CD4-positive, alpha-beta memory T cell (primary cell): ENCODE measurements at regions of chr11 and their contacts with region 1.

Region 1: GRCh38 chr11:65817835-65818742 is 15.7 kb upstream of the SNX32 start:
- DNase-seq: peak; percentile 86 to 93 (median 88)
- H3K4me3 ChIP-seq: peak overlapping the region; percentile 24 to 70
- H3K4me3 Mint-ChIP-seq: peak overlapping the region; percentile 73 to 85 (median 78)
- H3K27ac ChIP-seq: peak overlapping the region; percentile 53
- H3K27ac Mint-ChIP-seq: peak overlapping the region; percentile 73 to 92 (median 81)
- H3K4me1 ChIP-seq: peaks cover 12% of the 10 kb centered on the region
- H3K4me1 Mint-ChIP-seq: peaks cover 6 to 16% (median 10%) of the 10 kb centered on the region in 4 donors
- H3K27me3 ChIP-seq: no peaks in the 10 kb centered on the region
- H3K27me3 Mint-ChIP-seq: no peaks in the 10 kb centered on the region

Region 2: DNA sequence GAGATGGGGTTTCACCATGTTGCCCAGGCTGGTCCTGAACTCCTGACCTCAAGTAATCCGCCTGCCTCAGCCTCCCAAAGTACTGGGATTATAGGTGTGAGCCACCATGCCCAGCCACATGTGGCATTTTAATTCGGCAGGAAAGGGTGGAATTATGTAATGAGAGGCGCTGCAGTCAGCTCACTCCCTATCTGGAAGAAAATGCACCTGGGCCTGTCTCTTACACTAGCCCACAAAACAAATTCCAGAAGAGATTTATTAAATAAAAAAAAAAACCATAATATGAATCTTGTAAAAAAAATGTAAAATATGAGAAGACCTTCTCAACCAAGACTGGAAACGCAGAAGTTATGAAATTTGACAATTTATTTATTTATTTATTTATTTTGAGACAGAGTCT is 114.2 kb before region 1 on chr11:
- CTCF ChIA-PET with region 1: interaction called, 19 read pairs
- POLR2A ChIA-PET with region 1: no interaction called
- intact Hi-C with region 1: loop called (anchors 1 kb)
- DNase-seq: no peak
- H3K4me3 ChIP-seq: no peak overlapping the region
- H3K4me3 Mint-ChIP-seq: no peak overlapping the region
- H3K27ac ChIP-seq: no peak overlapping the region
- H3K27ac Mint-ChIP-seq: no peak overlapping the region
- H3K4me1 ChIP-seq: no peaks in the 10 kb centered on the region
- H3K4me1 Mint-ChIP-seq: peaks cover 0 to 10% (median 0%) of the 10 kb centered on the region in 4 donors
- H3K27me3 ChIP-seq: no peaks in the 10 kb centered on the region
- H3K27me3 Mint-ChIP-seq: peaks cover 1 to 7% of the 10 kb centered on the region in 2 donors

Region 3: GRCh38 chr11:65773784-65774411 is 44.2 kb before region 1 on chr11:
- CTCF ChIA-PET with region 1: interaction called, 107 read pairs
- POLR2A ChIA-PET with region 1: interaction called, 4 read pairs
- intact Hi-C with region 1: loop called (anchors 1 kb)
- DNase-seq: no peak
- H3K4me3 ChIP-seq: no peak overlapping the region
- H3K4me3 Mint-ChIP-seq: no peak overlapping the region
- H3K27ac ChIP-seq: no peak overlapping the region
- H3K27ac Mint-ChIP-seq: no peak overlapping the region
- H3K4me1 ChIP-seq: peaks cover 3% of the 10 kb centered on the region
- H3K4me1 Mint-ChIP-seq: peaks cover 0 to 8% (median 3%) of the 10 kb centered on the region in 4 donors
- H3K27me3 ChIP-seq: no peaks in the 10 kb centered on the region
- H3K27me3 Mint-ChIP-seq: no peaks in the 10 kb centered on the region

Region 4: DNA sequence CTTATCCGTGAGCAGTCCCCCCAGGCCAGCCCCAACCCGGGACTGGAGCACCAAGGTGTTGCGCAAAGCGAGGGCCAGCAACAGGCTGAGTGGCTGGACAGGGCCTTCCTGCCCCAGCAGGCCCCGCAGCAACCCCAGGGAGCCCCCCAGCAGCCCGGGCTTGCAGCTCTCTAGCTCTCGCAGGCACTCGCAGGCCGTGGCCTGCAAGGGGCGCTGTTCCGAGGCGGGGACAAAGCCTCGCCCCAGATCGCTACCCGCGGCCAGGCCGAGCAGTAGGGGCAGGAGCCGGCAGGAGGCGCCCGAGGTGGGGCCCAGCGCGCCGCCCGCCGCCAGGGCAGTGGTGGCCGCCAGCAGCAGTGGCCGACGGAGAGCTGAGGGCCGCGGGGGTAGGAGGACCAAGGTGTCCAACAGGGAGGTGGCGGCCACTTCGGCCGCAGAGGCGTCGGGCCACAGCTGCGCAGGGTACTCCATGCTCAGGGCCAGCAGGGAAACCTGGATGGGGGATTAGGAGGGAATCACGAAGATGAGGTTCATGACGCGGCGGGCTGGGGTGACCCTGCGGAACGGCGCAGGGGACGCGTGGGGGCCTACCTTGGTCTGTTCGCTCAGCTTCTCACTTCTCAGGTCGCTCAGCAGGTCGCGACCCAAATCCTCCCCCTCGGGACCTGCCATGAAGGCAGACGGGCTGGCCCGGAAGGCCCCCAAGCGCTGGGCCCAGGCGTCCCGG is 38.1 kb before region 1 on chr11:
- CTCF ChIA-PET with region 1: interaction called, 107 read pairs
- POLR2A ChIA-PET with region 1: interaction called, 24 read pairs
- intact Hi-C with region 1: loop called (anchors 1 kb)
- DNase-seq: peak; percentile 74 to 79 (median 77)
- H3K4me3 ChIP-seq: peak overlapping the region; percentile 54 to 65
- H3K4me3 Mint-ChIP-seq: peak overlapping the region; percentile 74 to 89 (median 84)
- H3K27ac ChIP-seq: peak overlapping the region; percentile 62
- H3K27ac Mint-ChIP-seq: peak overlapping the region in 6 of 7 donors; percentile 49 to 74 (median 72)
- H3K4me1 ChIP-seq: peaks cover 18% of the 10 kb centered on the region
- H3K4me1 Mint-ChIP-seq: peaks cover 5 to 20% (median 13%) of the 10 kb centered on the region in 4 donors
- H3K27me3 ChIP-seq: no peaks in the 10 kb centered on the region
- H3K27me3 Mint-ChIP-seq: no peaks in the 10 kb centered on the region

Region 5: GRCh38 chr11:65833297-65834030 is 15.4 kb after region 1 on chr11 and contains the start of gene SNX32:
- CTCF ChIA-PET with region 1: interaction called, 15 read pairs
- POLR2A ChIA-PET with region 1: interaction called, 3 read pairs
- intact Hi-C with region 1: no loop called
- DNase-seq: peak; percentile 91 to 94 (median 93)
- H3K4me3 ChIP-seq: peak within 1 kb of the TSS; percentile 31 to 67
- H3K4me3 Mint-ChIP-seq: no peak within 1 kb of the TSS
- H3K27ac ChIP-seq: peak within 1 kb of the TSS; percentile 17
- H3K27ac Mint-ChIP-seq: peak within 1 kb of the TSS in 5 of 7 donors; percentile 29 to 82 (median 70)
- H3K4me1 ChIP-seq: peaks cover 20% of the 10 kb centered on the region
- H3K4me1 Mint-ChIP-seq: peaks cover 8% of the 10 kb centered on the region in 4 donors
- H3K27me3 ChIP-seq: no peaks in the 10 kb centered on the region
- H3K27me3 Mint-ChIP-seq: no peaks in the 10 kb centered on the region
- total RNA-seq, gene SNX32: 0.42 to 0.64 TPM

Region 6: GRCh38 chr11:65988791-65989592 is 170.9 kb after region 1 on chr11:
- CTCF ChIA-PET with region 1: interaction called, 4 read pairs
- POLR2A ChIA-PET with region 1: no interaction called
- intact Hi-C with region 1: loop called (anchors 1 kb)
- DNase-seq: peak; percentile 92 to 94 (median 93)
- H3K4me3 ChIP-seq: no peak overlapping the region
- H3K4me3 Mint-ChIP-seq: peak overlapping the region in 1 of 8 donors; percentile 3
- H3K27ac ChIP-seq: no peak overlapping the region
- H3K27ac Mint-ChIP-seq: peak overlapping the region; percentile 68 to 95 (median 86)
- H3K4me1 ChIP-seq: peaks cover 6% of the 10 kb centered on the region
- H3K4me1 Mint-ChIP-seq: peaks cover 5 to 7% (median 6%) of the 10 kb centered on the region in 4 donors
- H3K27me3 ChIP-seq: no peaks in the 10 kb centered on the region
- H3K27me3 Mint-ChIP-seq: no peaks in the 10 kb centered on the region

Region 7: GRCh38 chr11:66022401-66023185 is 204.5 kb after region 1 on chr11:
- CTCF ChIA-PET with region 1: no interaction called
- POLR2A ChIA-PET with region 1: no interaction called
- intact Hi-C with region 1: loop called (anchors 1 kb)
- DNase-seq: peak; percentile 59 to 76 (median 63)
- H3K4me3 ChIP-seq: no peak overlapping the region
- H3K4me3 Mint-ChIP-seq: peak overlapping the region in 4 of 8 donors; percentile 33 to 72 (median 56)
- H3K27ac ChIP-seq: no peak overlapping the region
- H3K27ac Mint-ChIP-seq: peak overlapping the region in 1 of 7 donors; percentile 48
- H3K4me1 ChIP-seq: peaks cover 6% of the 10 kb centered on the region
- H3K4me1 Mint-ChIP-seq: peaks cover 0 to 9% (median 6%) of the 10 kb centered on the region in 4 donors
- H3K27me3 ChIP-seq: no peaks in the 10 kb centered on the region
- H3K27me3 Mint-ChIP-seq: peaks cover 4 to 6% of the 10 kb centered on the region in 2 donors